Heart left ventricle (tissue), 16 donors: ENCODE measurements at regions of chr11 and their contacts with region 1.

Region 1: DNA sequence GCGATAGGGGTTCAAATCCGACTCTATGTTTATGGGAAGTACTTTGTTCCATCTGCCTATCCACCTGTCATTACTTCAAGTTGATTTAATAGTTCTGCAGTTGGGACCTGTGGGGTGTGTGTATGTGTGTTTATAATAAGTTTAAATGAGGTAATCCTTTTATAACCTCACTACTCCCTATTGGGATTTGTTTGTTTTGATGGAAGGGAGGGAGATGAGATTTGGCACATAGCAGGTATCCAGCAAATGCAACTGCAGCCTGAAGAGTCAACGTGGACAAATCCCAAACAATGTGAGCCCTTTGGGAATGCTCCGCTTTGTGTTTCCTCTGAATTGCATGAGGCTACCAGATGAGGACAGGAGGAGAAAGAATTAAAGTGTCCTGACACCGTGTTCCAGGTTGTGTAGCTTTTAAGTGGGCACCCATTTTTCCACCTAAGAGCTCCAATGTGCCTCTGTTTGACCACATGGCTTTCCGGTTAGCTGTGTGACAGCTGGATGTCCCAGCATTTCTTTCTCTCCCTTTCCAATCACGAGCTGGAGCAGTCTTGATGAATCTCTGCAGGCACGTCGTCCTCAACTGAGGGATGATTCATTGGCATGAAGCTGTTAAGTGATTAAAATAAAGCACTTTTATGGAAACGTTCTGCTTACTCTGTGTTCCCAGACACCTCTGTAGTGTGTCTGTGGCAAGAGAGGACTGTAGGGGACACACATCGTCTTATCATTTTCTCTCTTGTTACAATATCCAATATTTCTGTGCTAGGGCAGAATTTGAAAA is 610.7 kb downstream of the NTM start:
- DNase-seq: no peak
- ATAC-seq: no peak
- H3K4me3 ChIP-seq: no peak overlapping the region
- H3K27ac ChIP-seq: no peak overlapping the region
- H3K4me1 ChIP-seq: no peaks in the 10 kb centered on the region
- H3K27me3 ChIP-seq: peaks cover 0 to 8% (median 0%) of the 10 kb centered on the region in 9 donors
- CTCF ChIP-seq: no peak
- POLR2A ChIP-seq: no peak

Region 2: DNA sequence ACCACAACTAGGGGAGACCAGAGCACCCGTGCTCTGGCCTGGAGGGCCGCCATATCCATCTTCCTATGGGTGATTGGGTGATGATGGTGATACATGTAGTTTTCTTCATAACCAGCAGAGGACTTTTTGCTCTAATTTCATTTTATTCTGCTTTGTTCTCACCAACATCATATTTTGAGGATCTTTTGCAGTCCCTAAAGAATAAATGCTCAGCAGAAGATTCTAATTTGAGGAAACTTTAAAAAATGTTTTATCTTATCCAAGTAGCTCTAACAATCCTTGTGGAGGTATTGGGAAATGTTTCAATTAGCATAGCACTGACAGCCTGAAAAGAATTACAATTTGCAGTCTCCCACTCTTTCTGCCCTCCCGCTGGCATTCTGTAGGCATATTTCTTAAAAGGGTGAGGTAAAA is 66.7 kb before region 1 on chr11:
- intact Hi-C with region 1: no loop called
- DNase-seq: no peak
- ATAC-seq: no peak
- H3K4me3 ChIP-seq: no peak overlapping the region
- H3K27ac ChIP-seq: no peak overlapping the region
- H3K4me1 ChIP-seq: peaks cover 0 to 17% (median 0%) of the 10 kb centered on the region in 12 donors
- H3K27me3 ChIP-seq: peaks cover 6 to 45% (median 14%) of the 10 kb centered on the region in 9 donors
- CTCF ChIP-seq: peak in 5 of 12 donors; percentile 14 to 29 (median 23)
- POLR2A ChIP-seq: no peak

Region 3: GRCh38 chr11:131924457-131925201 is 56.4 kb before region 1 on chr11:
- intact Hi-C with region 1: loop called in 1 of 10 experiments (anchors 10 kb)
- DNase-seq: no peak
- ATAC-seq: no peak
- H3K4me3 ChIP-seq: no peak overlapping the region
- H3K27ac ChIP-seq: no peak overlapping the region
- H3K4me1 ChIP-seq: peaks cover 0 to 9% (median 0%) of the 10 kb centered on the region in 12 donors
- H3K27me3 ChIP-seq: no peaks in the 10 kb centered on the region
- CTCF ChIP-seq: no peak
- POLR2A ChIP-seq: no peak